ENCODE measurements at regions of chr4 and their contacts with region 1.

Region 1: DNA sequence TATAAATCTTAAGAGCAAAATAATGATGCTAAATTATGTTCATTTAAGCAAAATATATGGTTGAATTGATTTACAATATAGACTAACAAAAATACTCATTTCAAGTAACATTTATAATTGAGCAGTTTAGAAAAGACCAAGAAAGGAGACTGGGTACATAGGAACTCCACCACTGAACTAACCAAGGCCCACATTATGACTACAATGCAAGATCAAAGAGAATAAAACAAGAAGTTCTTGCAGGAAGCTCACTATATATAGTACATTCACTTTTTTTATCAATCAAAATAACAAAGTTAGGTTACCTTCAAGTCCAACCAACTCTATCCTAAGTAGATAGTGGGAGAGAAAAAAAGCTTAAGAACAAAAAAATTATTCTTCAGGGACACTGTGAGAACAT is 8.0 kb downstream of the CHIC2 start:
- DNase-seq: no peak
- ATAC-seq: peak; percentile 78
- H3K4me3 Mint-ChIP-seq: no peak overlapping the region
- H3K27ac Mint-ChIP-seq: peak overlapping the region; percentile 51
- H3K4me1 Mint-ChIP-seq: peaks cover 64% of the 10 kb centered on the region
- H3K27me3 Mint-ChIP-seq: no peaks in the 10 kb centered on the region

Region 2: GRCh38 chr4:54041100-54041499 is 15.3 kb before region 1 on chr4:
- CTCF ChIA-PET with region 1: interaction called, 3 read pairs
- POLR2A ChIA-PET with region 1: no interaction called
- intact Hi-C with region 1: loop called in 1 of 2 experiments (anchors 2 kb)
- DNase-seq: no peak
- ATAC-seq: peak; percentile 83
- H3K4me3 Mint-ChIP-seq: no peak overlapping the region
- H3K27ac Mint-ChIP-seq: no peak overlapping the region
- H3K4me1 Mint-ChIP-seq: peaks cover 41% of the 10 kb centered on the region
- H3K27me3 Mint-ChIP-seq: no peaks in the 10 kb centered on the region

Region 3: GRCh38 chr4:54152846-54153600 is 96.7 kb after region 1 on chr4:
- CTCF ChIA-PET with region 1: no interaction called
- POLR2A ChIA-PET with region 1: no interaction called
- intact Hi-C with region 1: no loop called
- DNase-seq: no peak
- ATAC-seq: no peak
- H3K4me3 Mint-ChIP-seq: no peak overlapping the region
- H3K27ac Mint-ChIP-seq: no peak overlapping the region
- H3K4me1 Mint-ChIP-seq: no peaks in the 10 kb centered on the region
- H3K27me3 Mint-ChIP-seq: peaks cover 22% of the 10 kb centered on the region

Region 4: GRCh38 chr4:55125087-55125721 is 1068.8 kb after region 1 on chr4 and contains the start of gene KDR:
- CTCF ChIA-PET with region 1: no interaction called
- POLR2A ChIA-PET with region 1: no interaction called
- intact Hi-C with region 1: no loop called
- DNase-seq: no peak
- ATAC-seq: no peak
- H3K4me3 Mint-ChIP-seq: no peak within 1 kb of the TSS
- H3K27ac Mint-ChIP-seq: no peak within 1 kb of the TSS
- H3K4me1 Mint-ChIP-seq: peaks cover 5% of the 10 kb centered on the region
- H3K27me3 Mint-ChIP-seq: peaks cover 44% of the 10 kb centered on the region
- total RNA-seq, gene KDR: not detected